CD4-positive, alpha-beta memory T cell (primary cell): ENCODE measurements at regions of chr7 and their contacts with region 1.

Region 1: GRCh38 chr7:44490351-44491200 is at the start of gene NUDCD3:
- DNase-seq: peak; percentile 81 to 84 (median 83)
- H3K4me3 ChIP-seq: peak within 1 kb of the TSS; percentile 90 to 96
- H3K4me3 Mint-ChIP-seq: peak within 1 kb of the TSS; percentile 84 to 99 (median 93)
- H3K27ac ChIP-seq: peak within 1 kb of the TSS; percentile 93
- H3K27ac Mint-ChIP-seq: peak within 1 kb of the TSS; percentile 77 to 98 (median 96)
- H3K4me1 ChIP-seq: peaks cover 44% of the 10 kb centered on the region
- H3K4me1 Mint-ChIP-seq: peaks cover 37 to 52% (median 42%) of the 10 kb centered on the region in 4 donors
- H3K27me3 ChIP-seq: no peaks in the 10 kb centered on the region
- H3K27me3 Mint-ChIP-seq: no peaks in the 10 kb centered on the region
- total RNA-seq, gene NUDCD3: 100 to 108 TPM

Region 2: GRCh38 chr7:44044315-44045225 is 446.0 kb before region 1 on chr7 and contains the start of gene DBNL:
- CTCF ChIA-PET with region 1: no interaction called
- POLR2A ChIA-PET with region 1: interaction called, 14 read pairs
- intact Hi-C with region 1: no loop called
- DNase-seq: peak; percentile 79 to 91 (median 82)
- H3K4me3 ChIP-seq: peak within 1 kb of the TSS; percentile 89 to 94
- H3K4me3 Mint-ChIP-seq: peak within 1 kb of the TSS; percentile 89 to 96 (median 93)
- H3K27ac ChIP-seq: peak within 1 kb of the TSS; percentile 96
- H3K27ac Mint-ChIP-seq: peak within 1 kb of the TSS; percentile 94 to 98 (median 96)
- H3K4me1 ChIP-seq: peaks cover 57% of the 10 kb centered on the region
- H3K4me1 Mint-ChIP-seq: peaks cover 32 to 66% (median 50%) of the 10 kb centered on the region in 4 donors
- H3K27me3 ChIP-seq: no peaks in the 10 kb centered on the region
- H3K27me3 Mint-ChIP-seq: no peaks in the 10 kb centered on the region
- total RNA-seq, gene DBNL: 157 to 166 TPM

Region 3: DNA sequence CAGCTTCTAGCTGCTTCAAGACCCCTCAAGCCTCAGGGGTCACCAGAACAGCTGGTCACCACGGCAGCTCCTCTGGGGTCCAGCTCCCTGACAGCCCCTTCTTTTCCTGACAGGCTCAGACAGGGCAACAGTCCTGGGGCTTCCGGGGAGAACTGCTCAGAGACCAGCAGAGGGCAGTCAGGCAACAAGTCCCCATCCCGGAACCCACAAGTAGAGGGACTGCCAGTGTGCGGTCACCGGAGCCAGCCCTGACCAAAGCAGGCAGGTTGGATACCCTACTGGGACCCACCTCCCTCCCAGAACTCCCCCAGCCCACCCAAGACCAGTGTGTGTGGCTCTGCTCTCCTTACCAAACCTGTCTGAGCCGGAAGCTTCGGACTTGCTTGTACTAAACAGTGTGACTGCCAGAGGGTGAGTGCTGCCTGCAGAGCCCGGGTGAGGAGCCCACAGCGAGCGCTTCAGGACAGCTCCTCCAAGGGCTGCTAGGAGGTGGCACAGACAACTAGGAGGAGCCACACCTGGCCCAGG is 249.5 kb before region 1 on chr7:
- CTCF ChIA-PET with region 1: interaction called, 3 read pairs
- POLR2A ChIA-PET with region 1: no interaction called
- intact Hi-C with region 1: loop called (anchors 5 kb)
- DNase-seq: peak; percentile 54 to 63 (median 57)
- H3K4me3 ChIP-seq: no peak overlapping the region
- H3K4me3 Mint-ChIP-seq: peak overlapping the region in 7 of 8 donors; percentile 25 to 64 (median 52)
- H3K27ac ChIP-seq: no peak overlapping the region
- H3K27ac Mint-ChIP-seq: peak overlapping the region in 3 of 7 donors; percentile 19 to 59 (median 41)
- H3K4me1 ChIP-seq: no peaks in the 10 kb centered on the region
- H3K4me1 Mint-ChIP-seq: no peaks in the 10 kb centered on the region
- H3K27me3 ChIP-seq: no peaks in the 10 kb centered on the region
- H3K27me3 Mint-ChIP-seq: no peaks in the 10 kb centered on the region

Region 4: DNA sequence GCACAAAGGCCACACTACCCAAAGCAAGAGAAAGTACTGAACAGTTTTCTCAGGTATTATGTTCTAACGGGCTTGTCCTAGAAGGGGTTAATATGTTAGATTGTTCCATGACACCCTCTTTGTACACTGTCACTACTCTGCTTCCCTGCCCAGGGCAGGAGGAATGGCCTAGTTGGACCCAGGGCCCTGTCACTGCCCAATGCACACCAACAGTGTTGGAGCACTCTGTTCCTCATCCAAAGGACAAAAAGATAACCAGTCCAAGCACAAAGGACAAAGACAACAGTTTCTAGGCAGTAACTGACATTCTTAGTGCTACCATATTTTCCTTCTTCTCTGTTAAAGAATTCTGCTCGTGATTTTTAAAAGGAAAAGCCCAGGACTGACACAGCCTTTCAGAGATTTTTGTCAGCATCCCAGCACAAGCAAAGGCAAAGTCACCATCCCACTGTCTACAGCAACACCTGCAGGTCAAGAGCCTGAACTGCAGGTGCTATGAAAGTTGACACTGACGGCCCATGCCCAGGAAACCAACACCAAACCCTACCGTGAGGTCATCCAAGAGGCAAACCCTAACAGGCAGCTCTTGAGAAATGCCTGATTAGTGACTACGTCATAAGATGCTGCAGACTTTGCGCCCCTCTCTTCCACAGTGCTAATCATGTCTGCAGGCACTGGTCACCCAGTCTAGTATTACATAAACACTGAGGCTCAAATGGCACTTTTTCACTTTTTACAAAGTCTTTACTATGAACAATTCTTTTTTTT is 13.3 kb before region 1 on chr7:
- CTCF ChIA-PET with region 1: interaction called, 11 read pairs
- POLR2A ChIA-PET with region 1: interaction called, 23 read pairs
- intact Hi-C with region 1: no loop called
- DNase-seq: peak; percentile 68 to 72 (median 69)
- H3K4me3 ChIP-seq: no peak overlapping the region
- H3K4me3 Mint-ChIP-seq: peak overlapping the region in 1 of 8 donors; percentile 46
- H3K27ac ChIP-seq: no peak overlapping the region
- H3K27ac Mint-ChIP-seq: peak overlapping the region in 5 of 7 donors; percentile 15 to 81 (median 70)
- H3K4me1 ChIP-seq: peaks cover 20% of the 10 kb centered on the region
- H3K4me1 Mint-ChIP-seq: peaks cover 27 to 58% (median 36%) of the 10 kb centered on the region in 4 donors
- H3K27me3 ChIP-seq: no peaks in the 10 kb centered on the region
- H3K27me3 Mint-ChIP-seq: no peaks in the 10 kb centered on the region

Region 5: GRCh38 chr7:44581879-44582603 is 91.5 kb after region 1 on chr7 and contains the start of gene TMED4:
- CTCF ChIA-PET with region 1: no interaction called
- POLR2A ChIA-PET with region 1: interaction called, 27 read pairs
- intact Hi-C with region 1: no loop called
- DNase-seq: peak; percentile 100
- H3K4me3 ChIP-seq: peak within 1 kb of the TSS; percentile 79 to 98
- H3K4me3 Mint-ChIP-seq: peak within 1 kb of the TSS; percentile 90 to 95 (median 92)
- H3K27ac ChIP-seq: peak within 1 kb of the TSS; percentile 89
- H3K27ac Mint-ChIP-seq: peak within 1 kb of the TSS; percentile 97 to 99 (median 98)
- H3K4me1 ChIP-seq: peaks cover 34% of the 10 kb centered on the region
- H3K4me1 Mint-ChIP-seq: peaks cover 18 to 44% (median 32%) of the 10 kb centered on the region in 4 donors
- H3K27me3 ChIP-seq: no peaks in the 10 kb centered on the region
- H3K27me3 Mint-ChIP-seq: no peaks in the 10 kb centered on the region
- total RNA-seq, gene TMED4: 108 to 110 TPM

Region 6: GRCh38 chr7:45111298-45112223 is 621.0 kb after region 1 on chr7 and contains the start of gene TBRG4:
- CTCF ChIA-PET with region 1: no interaction called
- POLR2A ChIA-PET with region 1: interaction called, 11 read pairs
- intact Hi-C with region 1: loop called (anchors 1 kb)
- DNase-seq: peak; percentile 91 to 94 (median 94)
- H3K4me3 ChIP-seq: peak within 1 kb of the TSS; percentile 94 to 95
- H3K4me3 Mint-ChIP-seq: peak within 1 kb of the TSS; percentile 91 to 99 (median 97)
- H3K27ac ChIP-seq: peak within 1 kb of the TSS; percentile 87
- H3K27ac Mint-ChIP-seq: peak within 1 kb of the TSS; percentile 97 to 100 (median 99)
- H3K4me1 ChIP-seq: peaks cover 48% of the 10 kb centered on the region
- H3K4me1 Mint-ChIP-seq: peaks cover 28 to 60% (median 44%) of the 10 kb centered on the region in 4 donors
- H3K27me3 ChIP-seq: no peaks in the 10 kb centered on the region
- H3K27me3 Mint-ChIP-seq: peaks cover 4% of the 10 kb centered on the region in 2 donors
- total RNA-seq, gene TBRG4: 103 to 129 TPM